ENCODE measurements at regions of chr4 and their contacts with region 1.

Region 1: GRCh38 chr4:39961311-39961877 is 16.3 kb downstream of the PDS5A start:
- DNase-seq: no peak
- H3K4me3 ChIP-seq: no peak overlapping the region
- H3K27ac ChIP-seq: peak overlapping the region in 1 of 3 donors; percentile 27
- H3K4me1 ChIP-seq: peaks cover 9 to 11% of the 10 kb centered on the region in 2 donors
- H3K27me3 ChIP-seq: no peaks in the 10 kb centered on the region
- CTCF ChIP-seq: no peak
- POLR2A ChIP-seq: no peak

Region 2: GRCh38 chr4:39913471-39913870 is 47.9 kb before region 1 on chr4:
- intact Hi-C with region 1: loop called (anchors 10 kb)
- DNase-seq: no peak
- H3K4me3 ChIP-seq: no peak overlapping the region
- H3K27ac ChIP-seq: no peak overlapping the region
- H3K4me1 ChIP-seq: peaks cover 11 to 16% of the 10 kb centered on the region in 2 donors
- H3K27me3 ChIP-seq: no peaks in the 10 kb centered on the region
- CTCF ChIP-seq: no peak
- POLR2A ChIP-seq: no peak